Posterior vena cava (tissue), 2 donors: ENCODE measurements at regions of chr1 and their contacts with region 1.

Region 1: DNA sequence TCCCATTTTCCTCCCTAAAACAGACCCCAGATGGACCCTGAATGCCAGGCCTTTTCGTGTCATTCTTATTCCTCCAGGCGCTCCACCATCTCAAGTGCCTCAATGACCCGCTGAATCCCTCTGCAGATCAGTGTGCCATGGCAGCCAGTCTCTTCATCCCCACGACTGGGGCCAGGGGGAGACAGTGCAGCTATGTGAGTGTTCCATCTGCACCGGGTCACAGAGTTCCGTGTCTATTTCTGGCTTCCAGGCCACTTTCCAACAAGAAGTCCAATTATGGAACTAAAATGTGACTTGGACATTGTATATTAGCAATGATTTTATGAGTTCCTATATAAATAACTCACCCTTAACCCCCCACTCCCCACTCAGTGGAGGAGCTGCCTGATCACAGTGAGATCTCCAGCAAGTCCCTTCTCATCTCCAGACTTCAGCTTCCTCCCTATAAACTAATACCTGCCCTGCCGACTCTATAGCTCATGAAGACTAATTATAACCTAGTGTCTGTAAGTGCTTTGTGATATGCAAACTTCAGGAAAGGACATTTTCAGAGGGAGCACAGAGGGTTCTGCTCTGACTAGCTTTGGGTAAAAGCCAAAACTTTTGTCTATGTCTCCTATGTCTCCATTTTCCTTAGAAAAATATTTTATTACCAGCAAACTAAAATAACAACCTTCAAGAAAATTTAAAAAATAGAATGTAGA is 56.3 kb upstream of the NFASC start:
- DNase-seq: no peak

Region 2: GRCh38 chr1:204929487-204930154 is 115.3 kb after region 1 on chr1:
- intact Hi-C with region 1: loop called in 1 of 2 experiments (anchors 5 kb)
- DNase-seq: no peak